AG04450 (cell line): ENCODE measurements at regions of chr1 and their contacts with region 1.

Region 1: GRCh38 chr1:199123615-199124014 is 484.8 kb downstream of the PTPRC start:
- DNase-seq: peak; percentile 74
- H3K4me3 ChIP-seq: no peak overlapping the region
- H3K27ac ChIP-seq: no peak overlapping the region
- H3K27me3 ChIP-seq: no peaks in the 10 kb centered on the region
- CTCF ChIP-seq: no peak

Region 2: GRCh38 chr1:198937231-198938031 is 186.2 kb before region 1 on chr1:
- CTCF ChIA-PET with region 1: no interaction called
- POLR2A ChIA-PET with region 1: interaction called, 12 read pairs
- DNase-seq: peak; percentile 80
- H3K4me3 ChIP-seq: peak overlapping the region; percentile 69
- H3K27ac ChIP-seq: peak overlapping the region; percentile 58
- H3K27me3 ChIP-seq: no peaks in the 10 kb centered on the region
- CTCF ChIP-seq: no peak

Region 3: GRCh38 chr1:199084293-199084692 is 39.3 kb before region 1 on chr1:
- CTCF ChIA-PET with region 1: interaction called, 4 read pairs
- POLR2A ChIA-PET with region 1: interaction called, 15 read pairs
- DNase-seq: peak; percentile 85
- H3K4me3 ChIP-seq: no peak overlapping the region
- H3K27ac ChIP-seq: peak overlapping the region; percentile 82
- H3K27me3 ChIP-seq: no peaks in the 10 kb centered on the region
- CTCF ChIP-seq: no peak